Esophagus muscularis mucosa (tissue), 4 donors: ENCODE measurements at regions of chr14 and their contacts with region 1.

Region 1: DNA sequence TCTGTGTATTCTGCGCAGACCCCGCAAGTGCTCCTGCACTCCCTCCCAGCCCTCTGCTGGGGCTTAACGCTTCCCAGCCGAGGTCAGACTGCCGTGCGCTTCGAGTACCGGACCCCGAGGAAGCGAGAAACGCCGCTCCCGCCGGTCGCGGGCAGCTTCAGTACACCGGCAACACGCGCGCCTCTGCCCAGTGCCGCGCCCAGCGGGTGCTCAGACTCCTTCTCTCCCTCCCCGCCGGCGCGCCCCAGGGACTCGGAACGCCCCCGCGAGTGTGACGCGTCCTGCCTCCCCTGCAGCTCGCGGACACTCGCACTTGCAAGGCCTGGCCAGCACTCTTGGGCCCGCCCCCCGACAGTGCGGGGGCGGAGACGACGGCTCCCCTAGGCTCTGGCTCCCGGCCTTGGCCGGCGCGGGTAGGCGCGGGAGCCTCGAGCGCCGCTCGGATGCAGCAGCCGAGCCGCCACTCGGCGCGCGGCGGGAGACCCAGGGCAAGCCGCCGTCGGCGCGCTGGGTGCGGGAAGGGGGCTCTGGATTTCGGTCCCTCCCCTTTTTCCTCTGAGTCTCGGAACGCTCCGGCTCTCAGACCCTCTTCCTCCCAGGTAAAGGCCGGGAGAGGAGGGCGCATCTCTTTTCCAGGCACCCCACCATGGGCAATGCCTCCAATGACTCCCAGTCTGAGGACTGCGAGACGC is at the start of gene PTGER2:
- DNase-seq: peak; percentile 97
- H3K4me3 ChIP-seq: peak within 1 kb of the TSS; percentile 61 to 77 (median 68)
- H3K27ac ChIP-seq: peak within 1 kb of the TSS; percentile 65 to 84 (median 75)
- H3K4me1 ChIP-seq: peaks cover 14 to 36% (median 27%) of the 10 kb centered on the region in 4 donors
- H3K27me3 ChIP-seq: peaks cover 0 to 15% (median 0%) of the 10 kb centered on the region in 4 donors
- CTCF ChIP-seq: no peak
- EP300 ChIP-seq: no peak
- POLR2A ChIP-seq: peak; percentile 81
- total RNA-seq, gene PTGER2: 2.1 to 6.3 (median 4.4) TPM

Region 2: DNA sequence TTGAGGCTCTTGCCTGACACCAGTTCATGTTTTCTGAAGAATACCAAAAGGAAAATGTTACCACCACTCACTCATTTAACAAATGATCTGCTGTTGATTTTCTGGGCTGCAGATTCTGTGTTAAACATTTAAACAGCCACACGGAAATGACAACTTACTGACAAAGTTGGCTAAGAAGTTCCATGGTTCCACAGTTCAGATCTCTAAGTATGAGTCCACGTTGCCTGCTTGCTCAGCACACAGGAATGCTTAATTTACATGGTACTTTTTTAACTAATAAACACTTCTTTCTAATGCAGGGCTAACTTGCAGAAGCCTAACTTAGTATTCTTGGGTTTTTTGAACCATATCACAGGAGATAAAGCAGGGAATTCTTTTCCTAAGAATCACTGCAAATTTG is 34.7 kb after region 1 on chr14:
- intact Hi-C with region 1: loop called (anchors 5 kb)
- DNase-seq: no peak
- H3K4me3 ChIP-seq: no peak overlapping the region
- H3K27ac ChIP-seq: peak overlapping the region in 3 of 4 donors; percentile 1 to 52 (median 42)
- H3K4me1 ChIP-seq: peaks cover 0 to 43% (median 34%) of the 10 kb centered on the region in 4 donors
- H3K27me3 ChIP-seq: no peaks in the 10 kb centered on the region
- CTCF ChIP-seq: no peak
- EP300 ChIP-seq: no peak
- POLR2A ChIP-seq: no peak

Region 3: GRCh38 chr14:52455291-52456088 is 141.4 kb after region 1 on chr14:
- intact Hi-C with region 1: loop called (anchors 5 kb)
- DNase-seq: no peak
- H3K4me3 ChIP-seq: no peak overlapping the region
- H3K27ac ChIP-seq: no peak overlapping the region
- H3K4me1 ChIP-seq: no peaks in the 10 kb centered on the region
- H3K27me3 ChIP-seq: no peaks in the 10 kb centered on the region
- CTCF ChIP-seq: no peak
- EP300 ChIP-seq: no peak
- POLR2A ChIP-seq: no peak

Region 4: DNA sequence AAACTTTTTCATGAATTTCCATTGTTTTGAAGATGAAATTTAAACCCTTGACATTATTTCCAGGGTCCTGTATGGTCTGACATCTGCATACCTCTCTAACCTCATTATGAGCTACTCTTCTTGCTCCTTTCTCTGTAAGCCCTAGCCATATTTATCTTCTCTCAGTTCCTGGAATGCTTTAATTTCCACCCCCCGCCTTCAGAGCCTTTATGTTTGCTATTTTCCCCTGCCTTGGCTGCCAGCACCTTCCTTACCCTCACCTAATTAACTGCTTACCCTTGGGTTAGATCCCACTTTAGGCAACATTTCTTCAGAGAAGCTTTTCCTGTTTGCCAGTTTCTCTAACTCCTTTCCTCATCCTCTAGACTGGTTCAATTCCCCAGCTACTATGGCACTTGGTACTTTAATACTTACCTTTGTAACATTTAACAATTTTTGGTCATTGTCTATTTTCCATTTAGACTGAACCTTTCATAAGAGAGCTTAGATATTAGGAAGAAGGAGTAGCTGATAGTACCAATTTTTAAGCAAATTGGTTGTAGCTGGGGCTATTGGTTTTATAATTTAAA is 422.0 kb after region 1 on chr14:
- intact Hi-C with region 1: no loop called
- DNase-seq: no peak
- H3K4me3 ChIP-seq: no peak overlapping the region
- H3K27ac ChIP-seq: no peak overlapping the region
- H3K4me1 ChIP-seq: peaks cover 15 to 34% (median 17%) of the 10 kb centered on the region in 4 donors
- H3K27me3 ChIP-seq: no peaks in the 10 kb centered on the region
- CTCF ChIP-seq: no peak
- EP300 ChIP-seq: no peak
- POLR2A ChIP-seq: no peak